ENCODE measurements at regions of chr12 and their contacts with region 1.

Region 1: GRCh38 chr12:12611512-12612306 is at the start of gene CREBL2:
- DNase-seq: peak; percentile 92
- H3K4me3 Mint-ChIP-seq: peak within 1 kb of the TSS; percentile 95
- H3K27ac Mint-ChIP-seq: peak within 1 kb of the TSS; percentile 98
- H3K4me1 Mint-ChIP-seq: peaks cover 26% of the 10 kb centered on the region
- H3K27me3 Mint-ChIP-seq: no peaks in the 10 kb centered on the region
- CTCF ChIP-seq: no peak
- total RNA-seq, gene CREBL2: 17.4 and 22.5 TPM in 2 replicates

Region 2: DNA sequence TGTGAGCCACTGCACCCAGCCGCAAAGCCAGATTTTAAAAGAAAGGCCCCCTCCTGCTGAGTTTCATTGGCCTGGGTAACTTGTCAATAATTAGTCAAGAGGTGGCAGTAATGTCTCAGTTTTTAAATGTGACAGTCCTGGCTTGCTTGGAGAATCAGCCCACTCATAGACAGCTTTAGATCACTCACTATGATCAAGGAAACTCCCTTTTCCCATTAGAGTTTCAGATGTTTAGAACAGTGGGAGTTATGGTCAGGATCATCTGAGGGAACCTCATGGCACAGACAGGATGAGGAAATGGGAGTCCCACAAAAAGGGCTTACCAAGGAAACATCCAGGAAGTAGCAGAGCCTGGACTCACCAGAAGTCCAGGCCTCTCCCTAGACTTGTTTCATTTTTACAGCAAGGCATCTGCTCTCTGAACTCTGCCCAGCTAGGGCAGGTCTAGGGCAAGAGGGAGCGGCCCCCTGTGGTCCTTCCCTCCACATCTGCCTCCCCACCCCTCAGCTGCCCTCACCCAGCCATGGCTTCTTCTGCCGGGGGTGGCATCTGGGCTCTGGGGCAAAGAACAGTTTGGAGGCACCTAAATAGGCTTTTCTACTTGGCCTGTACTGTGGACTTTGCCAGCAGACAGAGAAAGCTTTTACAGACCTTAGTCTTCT is 529.7 kb before region 1 on chr12:
- CTCF ChIA-PET with region 1: no interaction called
- POLR2A ChIA-PET with region 1: no interaction called
- intact Hi-C with region 1: loop called (anchors 5 kb)
- DNase-seq: peak; percentile 54
- H3K4me3 Mint-ChIP-seq: no peak overlapping the region
- H3K27ac Mint-ChIP-seq: no peak overlapping the region
- H3K4me1 Mint-ChIP-seq: no peaks in the 10 kb centered on the region
- H3K27me3 Mint-ChIP-seq: no peaks in the 10 kb centered on the region
- CTCF ChIP-seq: peak; percentile 29

Region 3: DNA sequence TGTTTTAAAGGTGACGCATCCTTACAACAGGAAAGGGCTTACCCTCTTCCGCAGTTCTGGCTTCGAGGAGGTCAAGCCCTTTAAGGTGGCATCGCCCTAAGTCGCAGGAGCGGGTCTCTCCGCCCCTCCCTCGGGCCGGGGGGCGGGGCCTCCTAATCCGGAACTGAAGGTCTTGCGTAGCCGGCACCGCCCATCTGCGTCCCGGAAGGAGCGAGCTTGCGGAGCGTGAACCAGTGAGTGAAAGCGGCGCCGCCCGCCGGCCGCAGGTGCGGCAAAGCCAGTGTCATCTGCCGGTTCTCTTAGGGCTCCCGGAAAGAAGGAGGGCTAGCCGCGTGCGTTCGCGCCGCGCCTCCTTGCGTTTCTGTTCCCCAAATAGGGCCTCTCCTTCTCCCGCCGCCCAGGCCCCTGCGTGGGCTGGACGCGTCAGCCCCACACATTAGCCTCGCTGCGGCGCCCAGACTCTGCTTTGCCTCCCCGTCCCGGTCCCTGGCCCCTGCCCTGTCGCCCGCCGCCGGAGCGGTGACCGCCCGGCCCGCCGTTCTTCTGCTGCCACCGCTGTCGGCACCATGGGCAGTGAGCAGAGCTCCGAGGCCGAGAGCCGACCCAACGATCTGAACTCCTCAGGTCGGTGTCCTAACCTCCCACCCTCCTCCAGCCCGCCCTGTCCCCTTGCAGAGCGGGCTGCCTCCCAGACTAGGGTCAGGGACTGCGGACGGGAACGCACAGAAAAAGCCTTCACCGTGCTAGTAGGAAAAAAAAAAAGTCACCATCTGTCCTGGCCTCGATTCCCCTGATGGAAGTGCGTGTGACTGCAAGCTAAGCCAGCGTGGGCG is 254.6 kb before region 1 on chr12 and contains the start of gene BORCS5:
- CTCF ChIA-PET with region 1: interaction called, 3 read pairs
- POLR2A ChIA-PET with region 1: interaction called, 21 read pairs
- intact Hi-C with region 1: no loop called
- DNase-seq: peak; percentile 98
- H3K4me3 Mint-ChIP-seq: peak within 1 kb of the TSS; percentile 91
- H3K27ac Mint-ChIP-seq: peak within 1 kb of the TSS; percentile 94
- H3K4me1 Mint-ChIP-seq: no peaks in the 10 kb centered on the region
- H3K27me3 Mint-ChIP-seq: no peaks in the 10 kb centered on the region
- CTCF ChIP-seq: no peak
- total RNA-seq, gene BORCS5: 11.0 and 15.3 TPM in 2 replicates

Region 4: DNA sequence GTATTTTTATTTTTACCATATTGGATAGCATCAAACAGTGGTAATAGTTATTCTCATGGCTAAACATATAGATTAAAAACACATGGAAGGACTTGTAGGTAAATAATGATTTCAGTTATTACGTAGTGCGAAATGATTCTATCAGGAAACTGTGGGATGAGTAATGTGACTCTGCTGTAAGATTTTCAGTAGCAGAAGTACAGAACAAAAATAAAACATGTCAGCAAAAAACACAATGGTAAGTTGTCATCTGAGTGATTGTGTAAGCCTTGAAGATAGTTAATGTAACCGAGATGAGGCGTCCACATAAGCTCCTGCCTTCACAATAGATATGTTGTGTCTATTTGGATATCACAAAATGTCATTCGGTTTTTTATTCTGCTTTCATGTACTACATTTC is 155.1 kb before region 1 on chr12:
- CTCF ChIA-PET with region 1: no interaction called
- POLR2A ChIA-PET with region 1: no interaction called
- intact Hi-C with region 1: no loop called
- DNase-seq: peak; percentile 48
- H3K4me3 Mint-ChIP-seq: no peak overlapping the region
- H3K27ac Mint-ChIP-seq: peak overlapping the region; percentile 16
- H3K4me1 Mint-ChIP-seq: no peaks in the 10 kb centered on the region
- H3K27me3 Mint-ChIP-seq: no peaks in the 10 kb centered on the region
- CTCF ChIP-seq: no peak

Region 5: GRCh38 chr12:12553208-12553785 is 58.4 kb before region 1 on chr12:
- CTCF ChIA-PET with region 1: no interaction called
- POLR2A ChIA-PET with region 1: no interaction called
- intact Hi-C with region 1: no loop called
- DNase-seq: no peak
- H3K4me3 Mint-ChIP-seq: no peak overlapping the region
- H3K27ac Mint-ChIP-seq: no peak overlapping the region
- H3K4me1 Mint-ChIP-seq: peaks cover 7% of the 10 kb centered on the region
- H3K27me3 Mint-ChIP-seq: no peaks in the 10 kb centered on the region
- CTCF ChIP-seq: no peak

Region 6: DNA sequence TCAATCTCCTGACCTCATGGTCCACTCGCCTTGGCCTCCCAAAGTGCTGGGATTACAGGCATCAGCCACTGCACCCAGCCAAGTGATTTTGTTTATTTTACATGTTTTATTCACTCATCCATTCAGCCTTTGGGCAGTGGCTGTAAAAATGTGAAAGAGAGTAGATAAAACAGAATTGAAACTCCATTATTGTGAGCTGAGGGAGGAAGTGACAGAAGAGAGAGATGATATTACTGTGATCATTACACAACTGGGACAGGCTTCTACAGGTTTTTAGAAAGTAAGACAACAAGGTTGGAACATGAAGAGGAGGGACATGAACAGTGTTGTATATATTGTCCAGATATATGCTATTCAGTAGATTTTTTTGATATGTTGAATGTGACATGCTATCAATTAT is 24.9 kb after region 1 on chr12:
- CTCF ChIA-PET with region 1: interaction called, 5 read pairs
- POLR2A ChIA-PET with region 1: interaction called, 12 read pairs
- intact Hi-C with region 1: no loop called
- DNase-seq: no peak
- H3K4me3 Mint-ChIP-seq: no peak overlapping the region
- H3K27ac Mint-ChIP-seq: no peak overlapping the region
- H3K4me1 Mint-ChIP-seq: no peaks in the 10 kb centered on the region
- H3K27me3 Mint-ChIP-seq: no peaks in the 10 kb centered on the region
- CTCF ChIP-seq: no peak

Region 7: DNA sequence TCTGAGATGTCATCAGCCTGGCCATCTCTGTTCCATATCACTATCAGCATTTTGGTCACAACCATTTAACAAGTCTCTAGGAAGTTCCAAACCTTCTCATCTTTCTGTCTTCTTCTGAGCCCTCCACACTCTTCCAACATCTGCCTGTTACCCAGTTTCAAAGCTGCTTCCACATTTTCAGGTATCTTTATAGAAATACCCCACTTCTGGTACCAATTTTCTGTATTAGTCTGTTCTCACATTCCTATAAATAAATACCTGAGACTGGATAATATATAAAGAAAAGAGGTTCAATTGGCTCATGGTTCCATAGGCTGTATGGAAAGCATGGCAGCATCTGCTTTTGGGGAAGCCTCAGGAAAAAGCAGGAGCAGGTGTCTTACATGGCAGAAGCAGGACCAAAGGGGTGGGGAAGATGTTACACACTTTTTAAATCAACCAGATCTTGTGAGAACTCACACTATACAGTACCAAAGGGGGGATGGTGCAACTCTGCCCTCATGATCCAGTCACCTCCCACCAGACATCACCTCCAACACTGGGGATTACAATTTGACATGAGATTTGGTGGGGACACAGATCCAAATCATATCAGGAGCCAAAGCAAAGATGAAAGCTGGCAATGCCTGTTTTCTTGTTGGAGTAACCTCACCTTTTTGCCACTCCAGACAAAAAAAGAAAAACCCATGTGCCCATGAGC is 37.4 kb after region 1 on chr12:
- CTCF ChIA-PET with region 1: no interaction called
- POLR2A ChIA-PET with region 1: no interaction called
- intact Hi-C with region 1: no loop called
- DNase-seq: no peak
- H3K4me3 Mint-ChIP-seq: no peak overlapping the region
- H3K27ac Mint-ChIP-seq: no peak overlapping the region
- H3K4me1 Mint-ChIP-seq: no peaks in the 10 kb centered on the region
- H3K27me3 Mint-ChIP-seq: no peaks in the 10 kb centered on the region
- CTCF ChIP-seq: no peak

Region 8: DNA sequence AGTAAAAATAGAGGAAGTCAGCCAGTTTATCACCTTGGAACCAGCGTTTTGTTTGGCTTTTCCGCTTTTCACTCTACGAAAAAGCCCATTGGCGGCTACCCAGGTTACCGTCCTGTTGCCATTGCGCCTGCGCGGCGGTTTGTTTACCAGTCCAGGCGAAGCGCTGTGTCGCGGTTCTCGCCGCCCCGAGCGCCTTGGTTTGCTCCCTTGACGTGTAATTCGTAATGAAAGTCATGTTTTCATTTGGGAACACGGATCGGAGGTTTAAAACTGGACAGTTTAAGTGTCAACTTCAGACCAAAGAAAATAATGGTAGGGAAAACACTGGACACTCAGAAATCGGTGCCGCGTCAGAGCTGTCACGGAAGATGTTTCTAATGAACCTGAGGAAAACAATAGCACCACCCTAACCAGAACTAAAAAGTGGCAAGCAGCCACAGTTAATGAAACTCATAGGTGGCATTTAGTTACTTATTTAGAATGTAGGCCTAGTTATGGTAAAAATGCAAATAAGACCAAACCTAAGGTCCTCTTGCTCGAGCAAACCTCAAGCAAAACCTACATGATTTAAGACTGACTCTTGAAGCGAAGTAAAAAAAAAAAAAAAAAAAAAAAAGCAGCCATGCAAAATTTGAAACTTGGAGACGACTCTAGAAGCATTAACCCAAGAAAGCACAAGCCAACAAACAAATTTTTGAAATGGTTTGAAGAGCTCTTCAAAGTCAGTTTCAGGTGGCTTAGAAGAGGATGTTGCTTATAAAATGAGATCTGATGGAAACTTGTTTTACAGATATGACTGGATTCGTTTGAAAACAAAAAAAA is 85.1 kb after region 1 on chr12:
- CTCF ChIA-PET with region 1: interaction called, 3 read pairs
- POLR2A ChIA-PET with region 1: interaction called, 15 read pairs
- intact Hi-C with region 1: no loop called
- DNase-seq: peak; percentile 86
- H3K4me3 Mint-ChIP-seq: peak overlapping the region; percentile 88
- H3K27ac Mint-ChIP-seq: peak overlapping the region; percentile 99
- H3K4me1 Mint-ChIP-seq: peaks cover 16% of the 10 kb centered on the region
- H3K27me3 Mint-ChIP-seq: no peaks in the 10 kb centered on the region
- CTCF ChIP-seq: no peak